Activated naive CD4-positive, alpha-beta T cell treated with anti-CD3 and anti-CD28 coated beads for 36 hours (primary cell): ENCODE measurements at regions of chr3 and their contacts with region 1.

Region 1: DNA sequence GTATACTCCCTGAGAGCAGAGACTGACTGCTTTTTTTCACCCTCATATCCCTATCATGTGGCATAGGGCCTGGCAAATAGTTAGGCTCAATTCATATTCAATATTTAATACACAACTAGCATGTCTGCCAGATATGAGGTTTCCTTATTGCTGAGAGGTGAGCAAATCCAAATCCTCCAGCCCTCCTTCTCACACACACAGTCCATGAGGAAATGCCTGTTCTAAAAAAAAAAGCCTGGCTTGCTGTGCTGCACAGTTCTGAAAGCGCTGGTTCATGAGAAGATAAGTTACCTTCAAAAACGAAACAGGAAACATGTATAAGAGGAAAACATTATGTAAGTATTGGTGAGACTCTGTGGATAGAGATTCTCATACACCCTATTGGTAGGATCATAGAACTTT is 15.5 kb upstream of the ACAP2 start:
- DNase-seq: no peak
- H3K4me3 Mint-ChIP-seq: peak overlapping the region; percentile 22
- H3K27ac Mint-ChIP-seq: no peak overlapping the region
- H3K4me1 Mint-ChIP-seq: peaks cover 20% of the 10 kb centered on the region
- H3K27me3 Mint-ChIP-seq: no peaks in the 10 kb centered on the region

Region 2: GRCh38 chr3:195407531-195408409 is 50.5 kb before region 1 on chr3:
- CTCF ChIA-PET with region 1: no interaction called
- intact Hi-C with region 1: loop called (anchors 5 kb)
- DNase-seq: no peak
- H3K4me3 Mint-ChIP-seq: peak overlapping the region; percentile 28
- H3K27ac Mint-ChIP-seq: no peak overlapping the region
- H3K4me1 Mint-ChIP-seq: peaks cover 47% of the 10 kb centered on the region
- H3K27me3 Mint-ChIP-seq: no peaks in the 10 kb centered on the region